ENCODE measurements at regions of chr13 and their contacts with region 1.

Region 1: DNA sequence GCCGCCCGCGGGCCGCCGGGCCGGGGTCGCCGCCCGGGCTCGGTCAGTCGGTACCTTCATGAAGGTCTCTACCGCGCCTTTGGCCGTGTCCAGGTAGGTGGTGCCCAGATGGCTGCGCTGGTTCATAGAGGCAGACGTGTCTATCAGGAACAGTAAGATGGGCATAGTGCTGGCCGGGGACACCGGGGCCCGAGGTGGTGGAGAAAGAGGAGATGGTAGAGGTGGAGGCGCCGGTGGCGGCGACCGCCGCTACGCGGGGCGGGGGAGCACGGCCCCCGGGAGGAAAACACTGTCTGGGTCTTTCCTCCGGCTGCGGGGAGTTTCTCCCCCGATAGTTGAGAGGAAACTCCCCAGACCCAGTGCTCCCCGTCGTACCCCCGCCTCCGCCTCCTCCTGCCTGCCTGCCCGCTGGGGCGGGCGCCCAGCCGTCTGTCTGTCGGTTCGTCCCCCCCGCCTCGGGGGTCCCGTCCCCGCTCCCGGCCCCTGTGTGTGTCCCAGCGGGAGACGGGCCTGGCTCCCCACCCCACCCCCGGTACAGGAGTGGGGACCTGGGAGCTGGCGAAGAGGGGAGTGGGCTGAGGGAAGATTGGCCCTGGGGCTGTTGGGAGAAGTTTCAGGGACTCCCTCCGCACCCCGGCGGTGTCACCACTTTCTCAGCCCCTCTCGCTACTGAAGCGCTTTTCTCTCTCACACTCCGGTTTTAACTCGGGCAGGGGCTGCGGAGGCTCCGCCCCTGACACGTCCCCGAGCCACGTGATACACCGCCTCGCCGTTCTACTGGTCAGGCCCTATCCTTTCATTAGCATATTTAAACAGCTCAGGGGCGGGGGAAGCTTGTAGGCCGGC is at the start of gene INTS6:
- DNase-seq: peak; percentile 100
- H3K4me3 ChIP-seq: peak within 1 kb of the TSS; percentile 85 to 97
- H3K27ac ChIP-seq: peak within 1 kb of the TSS; percentile 98 to 100
- H3K4me1 ChIP-seq: peaks cover 0 to 32% (median 11%) of the 10 kb centered on the region in 4 donors
- H3K27me3 ChIP-seq: no peaks in the 10 kb centered on the region
- CTCF ChIP-seq: no peak

Region 2: GRCh38 chr13:51583875-51584730 is 131.5 kb after region 1 on chr13 and contains the start of gene WDFY2:
- intact Hi-C with region 1: loop called (anchors 2 kb)
- DNase-seq: peak; percentile 100
- H3K4me3 ChIP-seq: peak within 1 kb of the TSS; percentile 75 to 97
- H3K27ac ChIP-seq: peak within 1 kb of the TSS; percentile 77 to 88
- H3K4me1 ChIP-seq: peaks cover 0 to 35% (median 20%) of the 10 kb centered on the region in 4 donors
- H3K27me3 ChIP-seq: no peaks in the 10 kb centered on the region
- CTCF ChIP-seq: peak in 1 of 2 experiments; percentile 44

Region 3: GRCh38 chr13:52011632-52012511 is 559.3 kb after region 1 on chr13 and contains the start of gene ALG11:
- intact Hi-C with region 1: loop called (anchors 10 kb)
- DNase-seq: peak; percentile 100
- H3K4me3 ChIP-seq: peak within 1 kb of the TSS; percentile 89 to 94
- H3K27ac ChIP-seq: peak within 1 kb of the TSS; percentile 75 to 83
- H3K4me1 ChIP-seq: peaks cover 0 to 23% (median 7%) of the 10 kb centered on the region in 4 donors
- H3K27me3 ChIP-seq: no peaks in the 10 kb centered on the region
- CTCF ChIP-seq: peak in 1 of 2 experiments; percentile 11

Region 4: DNA sequence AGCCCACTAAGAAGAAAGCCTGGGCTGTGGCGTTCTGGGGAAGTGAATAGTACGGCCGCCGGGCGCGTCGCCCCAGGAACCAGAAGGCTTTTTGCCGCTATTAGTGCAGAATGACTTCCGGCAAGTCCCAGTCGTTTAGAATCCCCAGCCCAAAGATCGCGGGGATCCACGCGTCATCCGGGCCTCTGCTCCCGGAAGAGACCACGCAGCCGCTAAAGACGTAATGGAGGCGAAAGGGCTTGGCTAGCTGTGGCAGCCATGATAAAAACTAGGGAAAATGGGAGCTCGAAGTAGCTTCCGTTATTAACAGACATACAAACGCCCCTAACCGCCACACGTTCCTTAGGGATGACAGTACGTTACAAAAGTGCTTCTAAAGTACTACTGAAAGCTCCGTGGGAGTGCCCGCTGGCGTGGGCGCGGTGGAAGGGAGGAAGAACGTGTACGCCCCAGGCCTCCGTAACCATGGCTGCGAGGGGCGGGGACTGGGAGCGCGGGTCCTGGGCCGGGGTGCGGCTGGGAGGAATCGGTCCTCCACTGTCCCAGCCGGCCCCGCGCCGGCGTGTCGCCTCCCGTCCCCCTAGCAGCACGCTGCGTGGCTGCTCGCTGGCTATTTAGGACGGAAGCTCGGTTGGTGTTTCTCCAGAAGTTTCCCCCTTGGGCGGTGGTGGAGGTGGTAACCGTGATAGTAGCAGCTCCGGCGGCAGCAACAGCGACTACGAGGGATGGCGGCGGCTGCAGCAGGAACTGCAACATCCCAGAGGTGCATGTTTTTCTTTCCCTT is 1199.8 kb after region 1 on chr13 and contains the start of gene SUGT1:
- intact Hi-C with region 1: loop called (anchors 10 kb)
- DNase-seq: peak; percentile 97 to 98
- H3K4me3 ChIP-seq: peak within 1 kb of the TSS; percentile 79 to 83
- H3K27ac ChIP-seq: peak within 1 kb of the TSS; percentile 94 to 96
- H3K4me1 ChIP-seq: peaks cover 0 to 51% (median 33%) of the 10 kb centered on the region in 4 donors
- H3K27me3 ChIP-seq: no peaks in the 10 kb centered on the region
- CTCF ChIP-seq: peak; percentile 65 to 73

Measured in tibial artery (tissue), 4 donors.